ENCODE measurements at regions of chr12 and their contacts with region 1.

Region 1: DNA sequence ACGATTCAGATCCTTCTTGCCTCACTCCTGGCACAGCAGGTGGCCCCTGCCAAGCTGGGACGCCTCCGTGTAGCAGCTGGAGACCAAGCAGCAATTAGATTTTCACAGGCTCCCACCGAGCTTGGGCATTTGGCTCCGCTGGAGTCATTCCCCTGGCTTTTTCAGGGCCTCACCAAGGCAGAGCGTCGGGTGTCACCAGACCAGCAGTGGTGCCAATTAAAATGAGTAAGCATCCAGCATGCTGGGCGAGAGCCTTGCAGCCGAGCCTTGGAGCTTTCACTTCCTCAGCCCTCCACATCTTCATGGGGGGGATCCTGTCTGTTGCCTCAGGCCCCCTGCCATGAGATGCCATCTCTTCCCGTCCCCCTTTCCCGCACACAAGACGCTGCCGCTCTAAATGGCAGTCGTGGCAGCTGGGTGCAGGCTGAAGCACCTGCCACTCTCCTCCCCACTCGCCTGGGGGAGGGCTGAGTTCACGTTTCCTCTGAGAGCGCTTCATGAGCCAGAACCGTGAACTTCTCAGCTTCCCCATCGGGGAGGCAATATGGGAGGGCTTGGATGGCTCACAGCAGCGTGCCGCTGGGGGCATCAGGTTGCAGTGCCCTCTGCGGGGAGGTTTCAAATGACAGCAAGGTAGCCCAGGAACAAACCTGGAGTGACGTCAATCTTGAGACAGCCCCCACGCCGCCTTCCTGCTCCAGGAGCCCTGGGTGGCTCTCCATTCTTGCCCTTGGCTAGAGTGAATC is 11.7 kb downstream of the TPCN1 start:
- DNase-seq: peak; percentile 69
- ATAC-seq: peak; percentile 78
- H3K4me3 ChIP-seq: no peak overlapping the region; the same call in 1 of the 2 replicates
- H3K27ac ChIP-seq: peak overlapping the region; percentile 86
- H3K4me1 ChIP-seq: peaks cover 57% of the 10 kb centered on the region
- H3K27me3 ChIP-seq: no peaks in the 10 kb centered on the region
- CTCF ChIP-seq: peak; percentile 34 to 53 (median 51); a peak in 4 of 6 replicates
- EP300 ChIP-seq: no peak
- POLR2A ChIP-seq: peak; percentile 72
- RAD21 ChIP-seq: peak; percentile 48

Region 2: DNA sequence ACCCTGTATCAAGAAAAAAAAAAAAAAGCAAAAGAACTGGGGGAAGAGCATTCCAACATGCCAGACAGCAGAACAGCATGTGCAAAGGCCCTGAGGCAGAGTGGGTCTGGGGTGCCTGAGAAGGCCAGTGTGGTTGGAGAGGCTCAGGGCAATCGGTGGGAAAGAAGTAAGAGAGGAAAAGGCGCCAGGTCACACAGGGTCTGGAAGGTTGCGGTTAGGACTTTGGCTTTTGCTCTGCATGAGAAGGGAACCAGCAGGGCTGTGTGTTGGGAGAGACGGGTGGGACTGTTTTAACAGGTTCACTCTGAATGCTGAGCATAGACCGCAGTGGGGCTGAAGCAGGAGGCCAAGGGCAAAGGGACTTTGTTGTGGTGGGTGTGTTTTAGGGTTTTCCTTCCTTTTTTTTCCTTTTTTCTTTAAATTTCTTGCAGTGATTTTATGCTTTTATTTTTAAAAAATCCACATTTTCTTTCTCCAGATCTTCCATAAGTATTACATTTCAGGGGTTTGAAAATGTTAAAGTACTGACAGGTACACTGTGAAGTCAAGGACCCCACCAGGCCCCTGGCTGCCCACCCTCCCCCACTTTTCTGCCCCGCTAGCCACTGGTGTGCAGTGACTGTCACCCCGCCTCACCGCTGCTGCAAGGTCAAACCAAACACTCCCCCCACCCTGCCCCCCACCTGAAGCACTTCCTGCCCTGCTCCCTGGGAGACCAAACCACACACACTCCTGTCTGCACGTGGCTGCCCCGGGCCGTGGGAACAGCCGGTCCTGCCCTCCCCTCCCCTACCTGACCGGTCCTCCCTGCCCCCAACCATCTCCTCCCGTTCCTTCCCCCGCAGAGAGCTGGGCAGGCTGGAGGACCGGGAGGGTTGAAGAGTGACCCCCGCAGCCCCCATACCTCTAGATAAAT is 146.5 kb before region 1 on chr12:
- CTCF ChIA-PET with region 1: no interaction called
- POLR2A ChIA-PET with region 1: interaction called, 10 read pairs
- RAD21 ChIA-PET with region 1: no interaction called
- SMC1A ChIA-PET with region 1: no interaction called
- in situ Hi-C with region 1: no loop called
- intact Hi-C with region 1: no loop called
- DNase-seq: peak; percentile 62
- ATAC-seq: peak; percentile 55
- H3K4me3 ChIP-seq: peak overlapping the region; percentile 2; the same call in 1 of the 2 replicates
- H3K27ac ChIP-seq: peak overlapping the region; percentile 80
- H3K4me1 ChIP-seq: peaks cover 67% of the 10 kb centered on the region
- H3K27me3 ChIP-seq: no peaks in the 10 kb centered on the region
- CTCF ChIP-seq: no peak
- EP300 ChIP-seq: 0 out of 4 replicates have a peak, but pooled peaks of 1 of the 2 experiments have one; percentile 38
- POLR2A ChIP-seq: no peak
- RAD21 ChIP-seq: no peak

Region 3: DNA sequence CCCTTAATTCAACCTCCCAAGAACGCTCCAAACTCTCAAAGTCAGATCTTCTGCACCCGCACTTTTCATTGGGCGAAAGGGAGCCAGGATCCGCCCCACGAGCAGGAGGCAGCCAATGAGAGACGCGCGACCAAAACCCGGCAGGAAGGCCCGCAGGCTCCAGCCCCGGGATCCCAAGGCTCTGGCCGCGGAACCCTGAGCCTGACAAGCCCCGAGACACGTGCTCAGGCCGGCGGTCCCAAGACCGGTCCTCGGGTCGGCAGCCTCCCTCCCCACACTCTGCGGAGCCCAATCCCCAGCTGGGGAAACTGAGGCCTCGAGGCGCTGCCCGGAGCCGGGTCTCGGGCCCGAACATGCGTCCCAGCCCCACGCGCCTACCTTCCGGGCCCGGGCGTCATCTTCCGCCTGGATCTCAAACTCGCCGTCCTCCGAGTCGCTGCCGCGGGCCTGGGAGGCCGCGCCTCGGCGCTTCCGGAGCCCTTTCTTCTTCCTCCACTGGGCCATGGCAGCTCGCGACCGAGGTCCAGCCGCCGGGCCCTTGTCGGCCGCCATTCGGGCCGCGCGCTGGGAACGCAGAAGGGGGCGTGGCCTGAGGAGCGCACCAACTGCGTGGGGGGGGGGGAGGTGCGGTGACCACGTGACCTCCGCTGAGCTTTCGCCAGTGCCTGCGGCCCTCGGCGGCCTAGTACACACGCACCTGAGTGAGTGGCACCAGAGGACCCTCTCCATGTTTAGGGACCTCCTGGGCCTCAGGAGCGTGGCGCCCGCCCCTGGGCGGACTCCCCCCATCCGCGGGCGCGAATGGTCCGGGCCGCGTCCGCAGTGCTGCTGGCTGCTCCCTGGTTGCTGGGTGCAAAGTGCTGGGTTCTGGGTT is 47.9 kb before region 1 on chr12 and contains the starts of genes DDX54 and RITA1:
- CTCF ChIA-PET with region 1: interaction called, 6 read pairs
- POLR2A ChIA-PET with region 1: interaction called, 12 read pairs
- RAD21 ChIA-PET with region 1: interaction called, 8 read pairs
- SMC1A ChIA-PET with region 1: interaction called, 24 read pairs
- in situ Hi-C with region 1: no loop called
- intact Hi-C with region 1: no loop called
- DNase-seq: peak; percentile 81
- ATAC-seq: peak; percentile 87
- H3K4me3 ChIP-seq: peak within 1 kb of the TSS; percentile 86
- H3K27ac ChIP-seq: peak within 1 kb of the TSS; percentile 94
- H3K4me1 ChIP-seq: peaks cover 9% of the 10 kb centered on the region
- H3K27me3 ChIP-seq: no peaks in the 10 kb centered on the region
- CTCF ChIP-seq: no peak
- EP300 ChIP-seq: no peak
- POLR2A ChIP-seq: peak; percentile 98
- RAD21 ChIP-seq: no peak
- polyA plus RNA-seq, gene DDX54: 1.9 to 8.6 TPM
- polyA plus RNA-seq, gene RITA1: 2.3 to 6.4 TPM

Region 4: GRCh38 chr12:113208041-113208934 is 24.7 kb before region 1 on chr12:
- CTCF ChIA-PET with region 1: interaction called, 10 read pairs
- POLR2A ChIA-PET with region 1: interaction called, 67 read pairs
- RAD21 ChIA-PET with region 1: interaction called, 35 read pairs
- SMC1A ChIA-PET with region 1: interaction called, 237 read pairs
- in situ Hi-C with region 1: no loop called
- intact Hi-C with region 1: loop called (anchors 1 kb)
- DNase-seq: peak; percentile 99
- ATAC-seq: peak; percentile 84
- H3K4me3 ChIP-seq: peak overlapping the region; percentile 16; the same call in 1 of the 2 replicates
- H3K27ac ChIP-seq: peak overlapping the region; percentile 84
- H3K4me1 ChIP-seq: peaks cover 54% of the 10 kb centered on the region
- H3K27me3 ChIP-seq: no peaks in the 10 kb centered on the region
- CTCF ChIP-seq: no peak
- EP300 ChIP-seq: peak; percentile 94 to 95
- POLR2A ChIP-seq: peak; percentile 75
- RAD21 ChIP-seq: peak; percentile 17; the same call in 1 of the 2 replicates

Region 5: GRCh38 chr12:113214938-113215400 is 18.0 kb before region 1 on chr12:
- CTCF ChIA-PET with region 1: interaction called, 3 read pairs
- POLR2A ChIA-PET with region 1: interaction called, 74 read pairs
- RAD21 ChIA-PET with region 1: interaction called, 35 read pairs
- SMC1A ChIA-PET with region 1: interaction called, 237 read pairs
- in situ Hi-C with region 1: no loop called
- intact Hi-C with region 1: no loop called
- DNase-seq: peak; percentile 80
- ATAC-seq: peak; percentile 79
- H3K4me3 ChIP-seq: no peak overlapping the region
- H3K27ac ChIP-seq: no peak overlapping the region
- H3K4me1 ChIP-seq: peaks cover 33% of the 10 kb centered on the region
- H3K27me3 ChIP-seq: no peaks in the 10 kb centered on the region
- CTCF ChIP-seq: no peak
- EP300 ChIP-seq: peak; percentile 62 to 75; a peak in 3 of 4 replicates
- POLR2A ChIP-seq: no peak
- RAD21 ChIP-seq: no peak

Region 6: DNA sequence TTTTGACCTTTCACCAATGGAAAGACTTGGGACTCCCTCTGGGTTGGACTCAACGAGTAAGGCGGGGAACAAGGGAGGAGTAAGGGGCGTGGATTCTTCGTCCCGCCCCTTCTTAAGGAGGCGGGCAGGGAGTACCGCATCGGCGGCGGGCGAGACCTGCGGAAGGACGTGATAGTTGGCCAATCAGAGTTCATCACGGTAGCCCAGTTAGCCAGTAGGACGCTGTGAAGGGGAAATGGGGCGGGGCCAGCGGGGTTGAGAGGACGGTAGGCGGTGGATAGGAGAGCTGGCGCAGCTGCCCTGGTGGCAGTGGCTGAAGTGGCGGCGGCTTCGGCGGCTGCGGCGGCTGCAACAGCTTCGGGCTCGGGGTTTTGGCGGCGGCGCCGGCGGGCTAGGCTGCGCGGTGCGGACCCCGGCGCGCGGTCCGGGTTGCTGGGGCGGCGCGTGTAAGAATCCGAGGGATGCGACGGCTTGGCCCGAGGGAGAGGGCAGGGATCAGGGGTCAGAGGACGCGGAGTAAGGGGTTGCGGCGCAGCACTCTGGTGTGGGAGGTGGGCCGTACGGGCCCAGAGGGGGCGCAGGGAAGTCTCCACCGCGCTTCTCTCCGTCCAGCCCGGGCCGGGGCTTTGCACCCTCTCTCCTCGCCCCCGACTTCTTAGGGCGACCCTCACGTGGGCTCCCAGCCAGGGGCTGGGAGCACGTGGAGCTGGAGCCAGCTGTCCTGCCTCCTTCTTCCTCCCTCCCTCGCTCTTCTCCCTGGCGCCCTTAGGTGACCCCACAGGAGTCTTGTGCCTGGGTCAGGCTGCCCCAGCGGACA is 11.6 kb before region 1 on chr12 and contains the start of gene TPCN1:
- CTCF ChIA-PET with region 1: interaction called, 11 read pairs
- POLR2A ChIA-PET with region 1: interaction called, 74 read pairs
- RAD21 ChIA-PET with region 1: interaction called, 47 read pairs
- SMC1A ChIA-PET with region 1: interaction called, 237 read pairs
- in situ Hi-C with region 1: no loop called
- intact Hi-C with region 1: no loop called
- DNase-seq: peak; percentile 100
- ATAC-seq: peak; percentile 89
- H3K4me3 ChIP-seq: peak within 1 kb of the TSS; percentile 89
- H3K27ac ChIP-seq: peak within 1 kb of the TSS; percentile 85
- H3K4me1 ChIP-seq: peaks cover 19% of the 10 kb centered on the region
- H3K27me3 ChIP-seq: no peaks in the 10 kb centered on the region
- CTCF ChIP-seq: no peak
- EP300 ChIP-seq: no peak
- POLR2A ChIP-seq: peak; percentile 99
- RAD21 ChIP-seq: no peak
- polyA plus RNA-seq, gene TPCN1: 0.79 to 1.0 TPM

Region 7: GRCh38 chr12:113358381-113359132 is 125.5 kb after region 1 on chr12 and contains the start of gene PLBD2:
- CTCF ChIA-PET with region 1: no interaction called
- POLR2A ChIA-PET with region 1: interaction called, 10 read pairs
- RAD21 ChIA-PET with region 1: interaction called, 3 read pairs
- SMC1A ChIA-PET with region 1: no interaction called
- in situ Hi-C with region 1: no loop called
- intact Hi-C with region 1: no loop called
- DNase-seq: peak; percentile 59
- ATAC-seq: peak; percentile 95
- H3K4me3 ChIP-seq: peak within 1 kb of the TSS; percentile 71
- H3K27ac ChIP-seq: peak within 1 kb of the TSS; percentile 40
- H3K4me1 ChIP-seq: 0 out of 2 replicates have a peak, but pooled peaks cover 4% of the 10 kb centered on the region
- H3K27me3 ChIP-seq: no peaks in the 10 kb centered on the region
- CTCF ChIP-seq: no peak
- EP300 ChIP-seq: no peak
- POLR2A ChIP-seq: peak; percentile 67
- RAD21 ChIP-seq: no peak
- polyA plus RNA-seq, gene PLBD2: 1.6 to 2.3 TPM